Aorta (tissue), 5 donors: ENCODE measurements at regions of chr10 and their contacts with region 1.

Region 1: DNA sequence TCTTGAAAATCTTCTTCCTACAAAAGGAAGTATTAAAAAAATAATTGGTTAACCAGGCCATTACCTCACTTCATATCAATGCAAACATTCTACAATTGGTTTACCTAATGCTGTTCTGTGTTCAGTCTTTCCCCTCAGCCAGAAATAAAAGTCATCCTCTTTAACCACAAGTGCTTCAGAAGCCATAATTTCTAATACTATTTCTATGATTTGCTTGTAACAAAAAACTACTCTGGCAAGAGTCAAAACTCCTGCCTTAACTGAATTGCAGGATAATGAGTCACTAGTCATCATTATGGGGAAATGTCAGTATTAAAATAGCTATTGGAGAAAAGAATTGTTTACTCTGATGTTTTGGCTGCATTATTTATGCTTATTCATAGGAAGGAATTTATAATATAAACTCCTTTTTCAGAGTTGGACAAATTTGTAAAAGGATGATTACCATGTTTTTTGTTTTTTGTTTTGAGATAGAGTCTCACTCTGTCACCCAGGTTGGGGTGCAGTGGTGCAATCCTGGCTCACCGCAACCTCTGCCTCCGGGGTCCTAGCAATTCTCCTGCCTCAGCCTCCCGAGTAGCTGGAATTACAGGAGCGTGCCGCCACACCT is 55.5 kb upstream of the ODAD2 start:
- DNase-seq: no peak
- ATAC-seq: peak; percentile 64
- H3K4me3 ChIP-seq: no peak overlapping the region
- H3K27ac ChIP-seq: peak overlapping the region in 1 of 2 donors; percentile 50
- H3K4me1 ChIP-seq: peaks cover 0 to 2% of the 10 kb centered on the region in 2 donors
- H3K27me3 ChIP-seq: no peaks in the 10 kb centered on the region

Region 2: DNA sequence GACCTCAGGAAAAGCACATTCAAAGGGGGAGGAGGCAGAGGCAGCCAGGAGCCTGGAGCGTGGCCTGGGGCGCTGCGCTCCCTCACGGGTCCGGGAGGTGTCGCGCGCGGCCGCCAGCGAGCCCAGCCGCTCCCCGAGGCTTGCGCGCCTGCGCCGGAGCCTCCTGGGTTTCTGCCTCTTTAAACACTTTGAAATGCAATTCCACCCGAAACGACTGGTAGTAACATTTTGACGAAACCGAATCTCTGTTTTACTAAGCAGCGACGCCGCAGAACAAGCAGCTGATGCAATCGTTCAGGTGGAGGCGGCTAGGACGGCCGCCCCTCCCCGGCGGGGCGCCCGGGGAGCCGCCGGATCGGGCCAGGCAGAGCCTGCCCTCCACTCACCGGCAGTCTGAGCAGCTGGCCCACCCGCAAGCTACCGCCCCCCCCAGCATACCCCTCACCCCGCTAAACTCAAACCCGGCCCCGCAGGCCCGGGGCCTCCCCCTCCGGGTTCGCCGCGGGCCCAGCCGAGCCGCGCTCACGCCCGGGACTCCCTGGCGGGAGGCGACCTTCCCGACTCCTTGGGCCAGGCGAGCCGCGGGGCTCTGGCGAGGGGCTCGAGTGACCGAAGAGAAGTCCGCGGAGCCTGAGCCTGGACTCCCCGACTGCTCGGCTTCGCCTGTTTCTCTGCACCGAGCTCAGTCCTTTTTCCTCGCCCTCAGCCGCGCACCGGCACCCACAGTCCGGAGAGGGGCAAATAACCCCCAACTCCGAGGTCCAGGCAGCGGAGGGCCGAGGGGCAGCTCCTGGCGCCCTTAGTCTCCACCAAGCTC is 311.9 kb before region 1 on chr10:
- intact Hi-C with region 1: loop called in 1 of 2 experiments (anchors 10 kb)
- DNase-seq: peak; percentile 86 to 94
- ATAC-seq: peak; percentile 90
- H3K4me3 ChIP-seq: peak overlapping the region; percentile 78 to 81
- H3K27ac ChIP-seq: peak overlapping the region; percentile 87 to 94
- H3K4me1 ChIP-seq: no peaks in the 10 kb centered on the region
- H3K27me3 ChIP-seq: no peaks in the 10 kb centered on the region

Region 3: DNA sequence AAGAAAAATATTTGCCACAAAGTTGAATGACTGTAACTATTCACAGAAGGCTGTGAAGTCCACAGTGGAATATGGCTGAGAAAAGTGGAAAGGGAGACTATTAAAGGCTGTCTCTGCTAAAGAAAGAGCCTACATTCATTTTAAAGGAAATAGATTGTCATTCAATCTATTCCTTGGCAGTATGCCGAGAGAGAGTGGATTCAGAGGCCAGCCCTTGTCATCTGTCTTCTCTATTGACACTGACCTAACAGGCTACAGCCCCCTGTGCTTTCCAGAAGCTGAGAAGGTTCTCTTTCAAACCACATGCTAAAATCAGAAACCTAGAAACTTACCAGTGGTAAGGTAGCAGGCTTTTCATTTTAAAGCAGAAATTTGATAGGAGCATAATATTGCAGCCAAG is 67.5 kb before region 1 on chr10:
- intact Hi-C with region 1: no loop called
- DNase-seq: no peak
- ATAC-seq: no peak
- H3K4me3 ChIP-seq: no peak overlapping the region
- H3K27ac ChIP-seq: no peak overlapping the region
- H3K4me1 ChIP-seq: no peaks in the 10 kb centered on the region
- H3K27me3 ChIP-seq: no peaks in the 10 kb centered on the region

Region 4: DNA sequence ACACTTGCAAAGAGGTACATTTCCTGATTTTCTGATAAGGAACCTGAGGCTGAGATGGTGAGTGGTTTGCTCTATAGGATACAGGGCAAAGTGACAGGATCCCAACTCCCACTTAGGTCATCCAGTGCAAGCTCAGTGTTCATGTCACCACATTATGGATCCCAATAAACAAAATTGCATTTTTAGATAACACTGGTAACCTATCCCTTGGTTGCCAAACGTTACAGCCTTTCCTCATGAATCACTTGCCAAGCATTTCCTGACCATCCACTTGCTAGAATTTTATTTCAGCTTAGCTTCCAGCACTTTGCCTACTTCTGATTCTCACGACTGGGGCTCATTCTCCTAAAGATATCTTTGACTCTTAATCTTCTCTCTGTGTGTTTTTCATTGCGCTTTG is 75.9 kb after region 1 on chr10:
- intact Hi-C with region 1: loop called in 1 of 2 experiments (anchors 10 kb)
- DNase-seq: no peak
- ATAC-seq: no peak
- H3K4me3 ChIP-seq: no peak overlapping the region
- H3K27ac ChIP-seq: no peak overlapping the region
- H3K4me1 ChIP-seq: no peaks in the 10 kb centered on the region
- H3K27me3 ChIP-seq: no peaks in the 10 kb centered on the region